Head of caudate nucleus (tissue), 42 donors: ENCODE measurements at regions of chr3 and their contacts with region 1.

Region 1: DNA sequence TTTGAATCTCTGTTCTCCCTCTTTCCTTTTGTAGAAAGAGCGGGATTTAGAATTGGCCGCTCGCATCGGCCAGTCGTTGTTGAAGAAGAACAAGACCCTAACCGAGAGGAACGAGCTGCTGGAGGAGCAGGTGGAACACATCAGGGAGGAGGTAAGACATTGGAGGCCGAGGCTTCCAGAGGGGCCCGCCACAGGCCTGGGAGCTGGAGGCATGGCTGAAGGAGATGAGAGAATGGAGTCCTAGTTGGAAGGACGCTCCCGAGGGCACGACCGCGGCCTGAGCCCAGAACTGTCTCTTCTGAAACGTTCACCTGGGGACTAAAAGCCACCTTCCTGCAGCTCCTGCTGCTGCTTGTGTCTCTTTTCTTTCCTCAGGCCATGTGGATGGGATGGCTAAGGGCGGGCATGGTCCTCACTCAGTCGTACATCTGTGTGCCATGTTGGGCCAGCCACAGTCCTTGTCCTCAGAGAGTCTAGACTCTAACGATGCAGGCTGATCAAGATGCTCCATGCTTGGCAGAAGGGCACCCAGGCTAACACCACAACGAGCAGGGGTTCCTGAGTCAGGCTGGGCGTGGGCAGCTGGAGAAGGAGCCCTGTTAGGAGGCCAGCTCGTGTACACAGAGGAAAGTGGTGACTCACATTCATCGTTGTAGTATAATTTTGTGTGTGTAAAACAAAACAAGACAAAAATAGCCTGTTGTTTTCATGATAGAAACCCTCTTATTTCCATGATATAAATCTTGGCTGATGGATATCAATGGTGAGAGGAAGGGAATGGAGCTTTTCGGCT is 81.1 kb downstream of the CCK start:
- DNase-seq: no peak

Region 2: DNA sequence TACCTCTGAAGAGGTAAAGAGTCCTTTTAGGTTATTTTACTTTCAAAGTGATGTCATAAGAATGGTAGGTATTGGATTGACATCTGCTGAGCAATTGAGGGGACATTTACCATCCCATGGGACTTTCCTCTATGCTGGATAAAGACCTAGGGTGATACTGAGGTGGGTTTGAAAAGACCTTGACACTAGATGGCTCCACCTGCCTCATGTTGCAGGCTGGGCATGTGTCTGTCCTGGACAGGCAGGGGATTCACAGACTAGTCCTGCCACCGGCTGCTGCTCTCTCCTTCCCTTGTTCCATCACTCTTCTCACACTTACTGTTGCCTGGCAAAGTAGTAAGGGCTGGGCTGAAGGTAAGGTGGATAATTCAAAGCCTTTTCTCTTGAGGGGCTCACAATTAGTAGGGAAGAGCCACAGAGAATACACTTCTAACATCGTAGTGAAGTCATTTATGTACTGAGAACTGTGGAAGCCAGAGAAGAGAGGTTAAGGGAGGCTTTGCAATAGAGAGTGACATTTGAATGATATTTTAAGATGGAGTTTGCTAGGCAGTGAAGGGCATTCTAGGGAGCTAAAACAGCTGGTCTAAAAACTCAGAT is 66.0 kb before region 1 on chr3:
- intact Hi-C with region 1: loop called (anchors 5 kb)
- DNase-seq: peak in 34 of 42 donors; percentile 23 to 79 (median 52)